ENCODE measurements at regions of chr2 and their contacts with region 1.

Region 1: GRCh38 chr2:232979871-232980461 is 33.1 kb downstream of the NGEF start:
- DNase-seq: peak; percentile 91 to 99
- H3K4me3 ChIP-seq: peak overlapping the region; percentile 33; the same call in 1 of the 2 replicates
- H3K27ac ChIP-seq: peak overlapping the region; percentile 95
- H3K4me1 ChIP-seq: peaks cover 51% of the 10 kb centered on the region
- H3K27me3 ChIP-seq: no peaks in the 10 kb centered on the region
- CTCF ChIP-seq: peak; percentile 44; the same call in 1 of the 2 replicates

Region 2: GRCh38 chr2:232890896-232891601 is 88.9 kb before region 1 on chr2:
- CTCF ChIA-PET with region 1: interaction called, 3 read pairs
- POLR2A ChIA-PET with region 1: no interaction called
- intact Hi-C with region 1: loop called (anchors 2 kb)
- DNase-seq: peak; percentile 62 to 99
- H3K4me3 ChIP-seq: no peak overlapping the region
- H3K27ac ChIP-seq: no peak overlapping the region
- H3K4me1 ChIP-seq: peaks cover 3% of the 10 kb centered on the region
- H3K27me3 ChIP-seq: no peaks in the 10 kb centered on the region
- CTCF ChIP-seq: no peak

Region 3: DNA sequence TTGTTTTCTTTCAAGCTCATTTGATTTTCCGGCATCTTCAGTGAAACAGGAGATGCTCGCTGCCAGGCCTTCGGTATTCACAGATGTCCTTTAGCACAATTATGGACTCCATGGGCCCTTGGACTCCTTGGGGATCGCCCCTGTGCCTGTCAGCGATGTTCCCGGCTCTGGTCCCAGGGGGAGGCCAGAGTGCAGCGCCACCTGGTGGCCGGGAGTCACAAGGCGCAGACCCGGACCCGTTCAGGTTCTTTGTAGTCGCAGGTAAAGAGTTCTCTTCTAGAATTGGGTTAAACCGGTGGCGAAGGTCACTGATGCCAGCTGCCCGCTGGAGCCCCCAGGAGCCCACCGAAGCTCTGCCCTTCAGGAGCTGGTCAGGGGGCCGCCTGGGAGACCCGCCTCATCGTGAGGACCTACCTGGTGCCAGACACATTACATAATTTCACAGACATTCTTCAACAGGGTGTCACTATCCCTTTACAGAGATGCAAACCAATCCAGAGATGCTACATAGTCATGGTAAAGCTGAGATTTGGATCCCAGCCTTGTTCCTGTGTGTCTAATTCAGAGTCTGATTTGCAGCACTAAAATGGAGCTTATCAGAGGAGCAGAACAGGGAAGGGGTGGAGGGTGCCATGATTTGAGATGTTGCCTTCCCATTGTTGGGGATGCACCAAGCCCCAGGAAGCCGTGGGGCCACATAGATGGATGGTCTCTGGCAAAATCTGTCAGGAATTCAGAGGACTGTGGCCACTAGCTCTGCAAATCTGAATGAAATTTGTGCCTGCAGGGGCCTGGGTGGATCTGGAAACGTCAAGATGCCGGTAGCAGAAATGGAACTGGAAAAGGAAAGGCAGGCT is 74.2 kb after region 1 on chr2:
- CTCF ChIA-PET with region 1: interaction called, 5 read pairs
- POLR2A ChIA-PET with region 1: no interaction called
- intact Hi-C with region 1: loop called (anchors 1 kb)
- DNase-seq: peak in 1 of 2 experiments; percentile 64
- H3K4me3 ChIP-seq: no peak overlapping the region
- H3K27ac ChIP-seq: no peak overlapping the region
- H3K4me1 ChIP-seq: peaks cover 32% of the 10 kb centered on the region
- H3K27me3 ChIP-seq: no peaks in the 10 kb centered on the region
- CTCF ChIP-seq: peak; percentile 97

Region 4: DNA sequence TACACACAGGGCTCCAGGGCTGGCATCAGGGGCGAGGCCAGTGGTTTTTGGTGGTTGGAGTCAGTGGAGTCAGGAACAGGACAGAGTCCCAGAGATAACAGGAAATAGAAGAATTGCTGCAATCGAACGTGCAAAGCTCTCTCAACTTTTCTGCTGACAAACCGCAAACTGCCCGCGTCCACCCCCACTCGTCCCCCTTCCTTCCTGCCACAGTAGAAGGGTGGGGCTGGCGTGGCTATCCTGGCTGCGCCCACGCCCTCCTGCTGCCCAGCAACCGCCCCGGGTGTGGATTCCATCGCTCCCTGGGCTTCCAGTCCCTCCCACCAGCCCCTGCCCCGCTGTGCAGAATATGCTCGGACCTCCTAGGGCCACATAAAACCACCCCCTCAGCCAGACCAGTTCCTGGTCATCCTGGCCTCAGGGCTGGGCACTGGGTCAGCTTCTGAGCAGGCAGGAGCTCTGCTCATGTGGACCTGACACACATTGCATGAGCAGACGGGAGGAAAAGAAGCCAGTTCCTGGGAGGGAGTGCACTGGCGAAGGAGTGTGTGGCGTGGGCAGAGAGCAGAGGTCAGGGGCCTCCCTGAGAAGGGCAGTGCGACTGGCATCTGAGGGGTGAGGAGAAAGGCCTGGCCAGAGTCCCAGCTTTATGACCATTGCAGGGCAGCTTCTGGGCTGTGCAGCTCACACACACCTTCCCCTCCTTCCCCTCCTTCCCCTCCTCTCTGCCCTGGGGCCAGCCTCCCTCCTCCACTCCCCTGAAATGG is 186.1 kb after region 1 on chr2:
- CTCF ChIA-PET with region 1: interaction called, 5 read pairs
- POLR2A ChIA-PET with region 1: no interaction called
- intact Hi-C with region 1: loop called (anchors 1 kb)
- DNase-seq: peak; percentile 97 to 99
- H3K4me3 ChIP-seq: no peak overlapping the region
- H3K27ac ChIP-seq: peak overlapping the region; percentile 76
- H3K4me1 ChIP-seq: peaks cover 53% of the 10 kb centered on the region
- H3K27me3 ChIP-seq: no peaks in the 10 kb centered on the region
- CTCF ChIP-seq: no peak

Region 5: DNA sequence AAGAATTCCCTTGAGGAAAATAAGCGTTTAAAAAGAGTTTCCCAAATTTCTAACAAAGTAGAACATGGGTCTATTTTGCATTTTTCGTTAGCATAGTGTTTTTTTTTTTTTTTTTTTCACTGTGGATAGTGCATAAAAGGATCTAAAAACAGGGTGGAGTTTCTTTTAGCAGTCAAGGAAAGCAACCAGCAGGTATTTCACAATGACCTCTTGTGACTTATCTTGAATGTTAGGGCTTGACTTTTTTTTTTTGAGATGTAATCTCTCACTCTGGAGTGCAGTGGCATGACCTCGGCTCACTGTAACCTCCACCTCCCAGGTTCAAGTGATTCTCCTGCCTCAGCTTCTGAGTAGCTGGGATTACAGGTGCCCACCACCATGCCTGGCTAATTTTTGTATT is 359.5 kb after region 1 on chr2:
- CTCF ChIA-PET with region 1: no interaction called
- POLR2A ChIA-PET with region 1: no interaction called
- intact Hi-C with region 1: no loop called
- DNase-seq: peak in 1 of 2 experiments; percentile 82
- H3K4me3 ChIP-seq: peak overlapping the region; percentile 6; the same call in 1 of the 2 replicates
- H3K27ac ChIP-seq: peak overlapping the region; percentile 11; the same call in 1 of the 2 replicates
- H3K4me1 ChIP-seq: peaks cover 23% of the 10 kb centered on the region
- H3K27me3 ChIP-seq: no peaks in the 10 kb centered on the region
- CTCF ChIP-seq: no peak

Region 6: GRCh38 chr2:233418761-233419625 is 439.0 kb after region 1 on chr2:
- CTCF ChIA-PET with region 1: no interaction called
- POLR2A ChIA-PET with region 1: no interaction called
- intact Hi-C with region 1: loop called (anchors 10 kb)
- DNase-seq: no peak
- H3K4me3 ChIP-seq: no peak overlapping the region
- H3K27ac ChIP-seq: no peak overlapping the region
- H3K4me1 ChIP-seq: peaks cover 57% of the 10 kb centered on the region
- H3K27me3 ChIP-seq: no peaks in the 10 kb centered on the region
- CTCF ChIP-seq: no peak

Measured in PC-9 (cell line).